Caco-2 (cell line): ENCODE measurements at regions of chr3 and their contacts with region 1.

Region 1: DNA sequence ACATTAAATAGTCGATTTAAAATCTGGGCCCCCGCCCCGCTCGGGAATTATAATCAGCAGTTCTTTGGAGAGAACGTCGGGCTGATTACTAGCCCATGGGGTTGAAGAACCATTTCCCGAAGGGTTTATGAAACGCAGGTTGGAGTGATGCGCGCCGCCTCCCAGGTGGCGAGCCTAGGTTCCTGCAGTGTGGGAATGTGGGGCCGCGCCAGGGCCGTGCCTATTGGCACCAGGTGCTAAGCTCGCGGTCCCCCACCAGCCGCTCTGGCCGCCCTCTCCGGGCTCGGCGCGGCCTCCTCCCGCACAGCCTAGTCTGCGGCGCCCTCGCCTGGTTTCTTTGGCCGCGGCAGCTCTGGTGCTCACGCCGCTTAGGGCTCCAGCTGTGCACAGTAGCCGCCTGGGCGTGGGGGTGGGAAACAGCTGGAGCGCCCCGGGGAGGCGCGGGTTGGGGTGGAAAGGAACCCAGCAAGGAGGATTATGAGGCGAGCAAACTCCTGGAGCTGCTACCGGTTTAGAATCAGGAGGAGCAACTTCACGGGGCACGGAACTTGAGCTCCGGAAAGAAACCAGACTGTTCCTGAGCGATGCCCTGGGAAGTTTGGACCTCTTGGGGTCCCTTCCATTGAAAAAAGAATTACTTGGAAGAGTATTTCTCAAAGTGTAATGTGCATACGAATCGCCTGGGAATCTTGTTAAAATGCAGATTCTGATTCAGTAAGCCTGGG is 5.6 kb upstream of the MECOM start:
- DNase-seq: peak; percentile 67 to 80
- H3K4me3 ChIP-seq: peak overlapping the region; percentile 51
- H3K4me3 Mint-ChIP-seq: peak overlapping the region; percentile 74
- H3K27ac Mint-ChIP-seq: no peak overlapping the region
- H3K4me1 ChIP-seq: no peaks in the 10 kb centered on the region
- H3K4me1 Mint-ChIP-seq: peaks cover 7% of the 10 kb centered on the region
- H3K27me3 ChIP-seq: peaks cover 1% of the 10 kb centered on the region
- H3K27me3 Mint-ChIP-seq: peaks cover 22% of the 10 kb centered on the region
- CTCF ChIP-seq: peak; percentile 77 to 91

Region 2: DNA sequence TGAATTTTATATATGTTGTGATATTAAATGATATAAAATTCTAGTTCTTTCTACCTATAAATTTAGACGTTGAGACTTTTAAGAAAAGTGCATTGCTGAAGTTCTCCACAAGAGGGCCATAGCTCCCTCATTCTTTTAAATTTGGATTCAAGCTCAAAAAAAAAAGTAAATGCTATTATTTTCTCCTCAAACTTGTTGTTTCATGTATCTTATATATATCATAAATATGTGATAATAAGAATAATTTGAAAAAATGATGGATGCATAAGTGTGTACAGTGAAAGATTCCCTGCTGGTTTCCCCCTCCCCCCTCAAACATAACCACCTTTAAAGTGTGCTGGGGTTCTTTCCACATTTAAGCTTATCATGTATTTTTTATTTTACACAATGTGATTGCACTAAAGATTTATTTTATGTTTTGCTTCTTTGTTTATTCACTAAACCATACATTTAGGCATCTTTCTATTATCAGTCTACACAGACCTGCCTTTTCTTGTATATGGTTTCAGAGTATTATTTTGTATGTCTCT is 804.0 kb before region 1 on chr3:
- CTCF ChIA-PET with region 1: interaction called, 10 read pairs
- POLR2A ChIA-PET with region 1: no interaction called
- intact Hi-C with region 1: loop called (anchors 10 kb)
- DNase-seq: peak in 1 of 2 experiments; percentile 33
- H3K4me3 ChIP-seq: no peak overlapping the region
- H3K4me3 Mint-ChIP-seq: no peak overlapping the region
- H3K27ac Mint-ChIP-seq: no peak overlapping the region
- H3K4me1 ChIP-seq: peaks cover 64% of the 10 kb centered on the region
- H3K4me1 Mint-ChIP-seq: peaks cover 17% of the 10 kb centered on the region
- H3K27me3 ChIP-seq: no peaks in the 10 kb centered on the region
- H3K27me3 Mint-ChIP-seq: no peaks in the 10 kb centered on the region
- CTCF ChIP-seq: peak; percentile 72 to 78

Region 3: DNA sequence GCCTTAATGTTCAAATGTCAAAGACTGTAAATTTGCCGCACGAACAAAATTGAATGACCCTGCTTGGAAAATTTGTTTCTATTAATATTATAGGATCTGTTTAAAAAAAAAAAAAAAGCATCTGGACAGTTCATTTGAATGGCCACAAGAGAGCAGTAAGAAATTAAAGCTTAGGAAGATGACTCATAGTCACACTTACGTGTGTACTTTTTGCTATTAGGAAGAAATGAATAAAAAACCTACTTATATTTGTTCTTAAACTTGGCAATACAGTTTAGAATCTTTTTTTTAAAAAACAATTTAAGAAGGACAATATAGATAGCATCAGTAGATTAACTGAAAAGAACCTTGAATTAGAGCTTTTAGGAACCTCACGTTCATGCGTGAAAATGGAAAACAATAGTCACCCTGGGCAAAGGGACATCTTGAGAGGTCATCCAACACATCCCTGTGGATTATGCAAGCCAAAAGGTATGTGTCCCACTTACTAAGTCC is 627.4 kb before region 1 on chr3:
- CTCF ChIA-PET with region 1: interaction called, 9 read pairs
- POLR2A ChIA-PET with region 1: no interaction called
- intact Hi-C with region 1: loop called (anchors 2 kb)
- DNase-seq: no peak
- H3K4me3 ChIP-seq: no peak overlapping the region
- H3K4me3 Mint-ChIP-seq: no peak overlapping the region
- H3K27ac Mint-ChIP-seq: no peak overlapping the region
- H3K4me1 ChIP-seq: no peaks in the 10 kb centered on the region
- H3K4me1 Mint-ChIP-seq: no peaks in the 10 kb centered on the region
- H3K27me3 ChIP-seq: no peaks in the 10 kb centered on the region
- H3K27me3 Mint-ChIP-seq: no peaks in the 10 kb centered on the region
- CTCF ChIP-seq: peak; percentile 28 to 58

Region 4: DNA sequence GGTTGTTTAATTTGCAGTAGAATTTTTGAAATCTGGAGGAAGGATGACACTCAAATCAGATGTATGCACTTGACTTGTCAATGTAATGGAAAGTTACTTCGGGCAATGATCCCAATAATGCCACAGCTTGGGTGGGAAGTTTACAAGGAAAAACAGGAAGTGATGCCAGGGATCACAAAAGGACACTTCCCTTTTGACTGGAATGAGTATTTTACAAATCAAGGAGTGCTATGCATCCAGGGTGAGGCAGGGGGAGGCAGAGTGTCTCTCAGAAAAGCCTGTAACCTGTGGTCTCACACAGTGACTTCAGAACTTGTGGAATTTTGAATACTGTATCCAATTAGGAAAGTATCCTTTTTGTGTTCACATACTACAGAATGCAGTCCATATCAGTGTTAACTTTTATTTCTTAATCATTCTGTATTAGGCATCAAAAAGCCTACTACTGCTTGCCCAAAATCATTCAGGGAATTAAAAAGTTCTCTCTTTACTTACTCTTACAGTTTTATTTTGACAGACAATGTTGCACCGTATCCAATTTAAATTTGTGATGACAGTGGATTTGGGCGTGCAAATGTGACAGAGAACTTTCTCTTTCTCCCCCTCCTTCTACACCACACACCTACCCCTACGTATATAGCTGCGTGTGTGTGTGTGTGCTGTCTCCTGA is 450.7 kb before region 1 on chr3:
- CTCF ChIA-PET with region 1: no interaction called
- POLR2A ChIA-PET with region 1: no interaction called
- intact Hi-C with region 1: loop called (anchors 1 kb)
- DNase-seq: peak; percentile 67
- H3K4me3 ChIP-seq: no peak overlapping the region
- H3K4me3 Mint-ChIP-seq: no peak overlapping the region
- H3K27ac Mint-ChIP-seq: no peak overlapping the region
- H3K4me1 ChIP-seq: no peaks in the 10 kb centered on the region
- H3K4me1 Mint-ChIP-seq: no peaks in the 10 kb centered on the region
- H3K27me3 ChIP-seq: no peaks in the 10 kb centered on the region
- H3K27me3 Mint-ChIP-seq: no peaks in the 10 kb centered on the region
- CTCF ChIP-seq: peak; percentile 51 to 79

Region 5: DNA sequence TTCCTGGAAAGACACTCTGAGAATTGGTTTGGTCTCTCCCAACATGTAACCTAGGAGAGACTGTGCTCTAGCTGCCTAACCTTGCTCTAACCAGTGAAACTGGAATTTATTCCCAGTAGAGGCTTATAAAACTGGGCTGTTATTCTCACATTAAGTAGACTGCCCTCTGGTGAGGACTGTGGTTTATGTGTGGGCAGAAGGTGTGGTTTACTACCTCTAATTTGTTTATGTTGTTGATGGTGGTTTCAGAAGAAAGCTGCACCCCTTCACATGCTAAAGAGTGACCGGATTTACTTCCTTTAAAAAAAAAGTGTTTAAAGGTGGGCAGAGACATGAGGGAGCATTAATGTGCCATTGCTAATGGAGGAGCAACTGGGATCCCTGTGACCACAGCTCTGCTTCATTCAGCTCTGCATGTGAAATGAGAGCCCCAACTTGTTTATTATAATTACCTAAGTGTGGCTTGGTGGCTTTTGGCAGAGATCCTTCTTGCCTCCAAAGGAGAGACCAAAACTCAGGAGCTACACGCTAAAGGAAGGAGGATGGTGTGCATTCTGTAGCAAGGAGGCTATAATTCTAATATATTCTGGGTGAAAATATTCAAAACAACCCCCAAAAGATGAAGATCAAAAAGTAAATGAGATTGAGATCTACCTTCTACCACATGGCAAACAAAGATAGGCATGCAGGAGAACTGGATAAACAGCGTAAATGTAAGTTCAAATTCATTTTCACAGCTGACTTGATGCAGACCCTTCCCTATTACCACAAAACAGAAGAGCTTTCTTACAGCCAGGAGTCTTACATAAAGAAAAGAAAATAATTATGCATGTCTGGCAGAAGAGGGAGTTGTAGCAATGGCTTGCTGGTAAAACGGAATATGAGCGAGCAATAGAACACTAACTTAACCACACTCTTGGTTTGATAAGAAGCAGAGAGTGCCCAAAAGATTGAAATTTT is 278.6 kb before region 1 on chr3:
- CTCF ChIA-PET with region 1: interaction called, 4 read pairs
- POLR2A ChIA-PET with region 1: no interaction called
- intact Hi-C with region 1: loop called (anchors 1 kb)
- DNase-seq: peak in 1 of 2 experiments; percentile 16
- H3K4me3 ChIP-seq: no peak overlapping the region
- H3K4me3 Mint-ChIP-seq: no peak overlapping the region
- H3K27ac Mint-ChIP-seq: peak overlapping the region; percentile 58
- H3K4me1 ChIP-seq: peaks cover 39% of the 10 kb centered on the region
- H3K4me1 Mint-ChIP-seq: peaks cover 33% of the 10 kb centered on the region
- H3K27me3 ChIP-seq: no peaks in the 10 kb centered on the region
- H3K27me3 Mint-ChIP-seq: no peaks in the 10 kb centered on the region
- CTCF ChIP-seq: peak in 1 of 2 experiments; percentile 26

Region 6: DNA sequence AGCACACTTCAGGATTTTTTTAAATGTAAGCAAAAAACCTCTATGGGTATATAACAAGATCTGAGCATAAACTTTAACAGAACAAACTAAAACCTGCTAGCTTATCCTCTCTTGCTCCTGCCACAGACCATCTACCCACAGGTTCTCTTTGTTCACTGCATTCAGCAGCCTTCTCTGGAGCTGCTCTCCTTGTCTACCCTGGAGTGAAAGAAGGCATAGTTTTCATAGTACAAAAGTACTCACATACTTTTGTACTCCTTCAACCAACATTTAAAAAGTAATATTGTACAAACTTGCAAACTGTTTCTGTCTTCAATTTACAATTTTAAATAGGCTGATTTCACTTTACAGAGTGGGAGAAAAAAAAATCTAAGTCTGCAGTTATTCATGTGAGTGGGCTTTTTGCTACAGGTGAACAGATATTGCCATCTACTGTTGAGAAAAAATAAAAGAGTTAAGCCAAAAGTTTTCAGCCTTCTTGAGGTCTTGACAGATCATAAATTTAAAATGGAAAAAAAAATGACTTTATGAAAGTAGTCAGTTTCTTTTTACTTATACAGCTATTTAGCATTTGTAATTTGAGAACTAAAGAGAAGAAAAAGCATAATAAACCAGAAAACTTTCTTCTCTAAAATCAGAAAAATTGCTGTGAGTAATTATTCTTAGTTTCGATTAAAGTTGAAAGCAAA is 75.4 kb after region 1 on chr3:
- CTCF ChIA-PET with region 1: no interaction called
- POLR2A ChIA-PET with region 1: no interaction called
- intact Hi-C with region 1: loop called (anchors 1 kb)
- DNase-seq: no peak
- H3K4me3 ChIP-seq: no peak overlapping the region
- H3K4me3 Mint-ChIP-seq: no peak overlapping the region
- H3K27ac Mint-ChIP-seq: no peak overlapping the region
- H3K4me1 ChIP-seq: peaks cover 12% of the 10 kb centered on the region; the same call in 1 of the 2 replicates
- H3K4me1 Mint-ChIP-seq: peaks cover 8% of the 10 kb centered on the region
- H3K27me3 ChIP-seq: no peaks in the 10 kb centered on the region
- H3K27me3 Mint-ChIP-seq: peaks cover 2% of the 10 kb centered on the region
- CTCF ChIP-seq: peak; percentile 30 to 31